Ascending aorta (tissue), 2 donors: ENCODE measurements at regions of chr16 and their contacts with region 1.

Region 1: DNA sequence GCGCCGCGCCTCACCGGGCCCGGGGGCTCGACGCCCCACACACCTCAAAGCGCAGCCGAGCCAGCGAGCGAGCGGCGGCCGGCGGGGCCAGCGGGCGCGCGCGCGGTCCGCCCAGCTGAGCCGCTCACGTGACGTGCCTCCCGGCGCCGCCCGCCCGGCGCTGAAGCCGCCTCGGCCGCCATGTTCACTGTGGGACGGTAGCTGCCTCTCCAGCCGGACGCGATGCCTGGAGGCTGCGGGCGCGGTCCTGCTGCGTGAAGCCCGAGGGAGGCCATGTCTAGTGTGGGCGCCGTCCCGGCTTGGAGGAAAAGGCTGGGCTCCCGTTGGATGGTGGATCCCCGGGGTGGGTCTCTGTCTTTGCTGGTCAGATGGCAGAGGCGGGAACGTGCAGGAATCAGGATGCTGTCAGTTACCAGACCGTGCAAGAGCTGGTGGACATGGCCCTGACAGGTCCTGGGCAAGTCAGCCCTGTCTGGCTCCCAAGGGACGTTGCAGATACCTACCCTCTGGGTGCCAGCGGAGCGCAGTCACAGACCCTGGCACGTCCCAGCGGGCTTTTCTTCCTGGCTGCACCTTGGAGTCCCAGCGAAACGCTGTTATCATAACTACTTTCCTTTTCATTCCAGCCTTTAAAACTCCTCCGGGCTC is at the start of gene USP31:
- DNase-seq: peak; percentile 82 to 97
- H3K4me3 ChIP-seq: peak within 1 kb of the TSS; percentile 76 to 88
- H3K27ac ChIP-seq: peak within 1 kb of the TSS; percentile 75 to 83
- H3K4me1 ChIP-seq: peaks cover 3 to 31% of the 10 kb centered on the region in 2 donors
- H3K27me3 ChIP-seq: no peaks in the 10 kb centered on the region
- CTCF ChIP-seq: no peak
- total RNA-seq, gene USP31: 6.2 TPM

Region 2: GRCh38 chr16:21599233-21600030 is 1550.0 kb before region 1 on chr16 and contains the start of gene METTL9:
- intact Hi-C with region 1: loop called (anchors 2 kb)
- DNase-seq: peak; percentile 82 to 96
- H3K4me3 ChIP-seq: peak within 1 kb of the TSS; percentile 93
- H3K27ac ChIP-seq: peak within 1 kb of the TSS; percentile 90 to 97
- H3K4me1 ChIP-seq: peaks cover 6 to 10% of the 10 kb centered on the region in 2 donors
- H3K27me3 ChIP-seq: no peaks in the 10 kb centered on the region
- CTCF ChIP-seq: peak in 1 of 3 experiments; percentile 9
- total RNA-seq, gene METTL9: 168 TPM

Region 3: GRCh38 chr16:23072084-23072599 is 77.3 kb before region 1 on chr16:
- intact Hi-C with region 1: loop called (anchors 1 kb)
- DNase-seq: peak; percentile 34 to 80
- H3K4me3 ChIP-seq: peak overlapping the region; percentile 23 to 47
- H3K27ac ChIP-seq: peak overlapping the region; percentile 74 to 85
- H3K4me1 ChIP-seq: peaks cover 2 to 21% of the 10 kb centered on the region in 2 donors
- H3K27me3 ChIP-seq: no peaks in the 10 kb centered on the region
- CTCF ChIP-seq: no peak

Region 4: GRCh38 chr16:23107936-23108335 is 41.5 kb before region 1 on chr16:
- intact Hi-C with region 1: loop called (anchors 5 kb)
- DNase-seq: no peak
- H3K4me3 ChIP-seq: no peak overlapping the region
- H3K27ac ChIP-seq: no peak overlapping the region
- H3K4me1 ChIP-seq: peaks cover 0 to 10% of the 10 kb centered on the region in 2 donors
- H3K27me3 ChIP-seq: no peaks in the 10 kb centered on the region
- CTCF ChIP-seq: no peak

Region 5: DNA sequence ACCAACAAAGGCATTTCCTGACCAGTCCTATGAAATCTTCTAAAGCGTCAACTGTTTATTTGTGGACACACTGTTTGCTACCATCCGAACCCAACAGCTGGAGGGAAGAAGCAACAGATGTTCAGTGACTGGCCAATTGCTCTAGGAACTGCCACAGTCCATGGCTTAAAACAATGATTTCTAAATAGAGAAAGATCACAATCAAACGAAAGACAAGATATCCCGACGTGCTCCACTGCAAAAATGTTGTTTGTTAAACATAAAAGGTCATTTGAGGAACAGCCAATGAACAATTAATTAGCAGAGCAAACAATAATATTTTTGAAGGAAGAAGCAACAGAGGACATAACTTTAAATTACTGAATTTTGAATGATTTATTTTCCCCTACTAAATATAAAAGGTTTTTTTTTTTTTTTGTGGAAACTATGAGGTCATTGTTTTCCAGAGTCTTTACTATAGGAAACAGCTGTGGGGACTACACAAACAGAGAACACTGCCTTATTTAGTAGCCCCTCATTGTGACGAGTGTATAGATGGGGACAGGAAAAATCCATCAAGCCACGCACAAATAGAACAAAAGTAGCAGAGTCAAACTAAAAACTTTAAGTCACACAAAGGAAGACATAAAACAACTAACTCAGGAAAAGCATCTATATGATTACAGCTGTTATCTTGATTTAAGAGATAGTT is 17.4 kb before region 1 on chr16:
- intact Hi-C with region 1: loop called (anchors 2 kb)
- DNase-seq: no peak
- H3K4me3 ChIP-seq: peak overlapping the region; percentile 31 to 55
- H3K27ac ChIP-seq: peak overlapping the region; percentile 80 to 81
- H3K4me1 ChIP-seq: peaks cover 5 to 26% of the 10 kb centered on the region in 2 donors
- H3K27me3 ChIP-seq: no peaks in the 10 kb centered on the region
- CTCF ChIP-seq: no peak

Region 6: GRCh38 chr16:25031441-25032307 is 1882.2 kb after region 1 on chr16:
- intact Hi-C with region 1: loop called (anchors 10 kb)
- DNase-seq: peak; percentile 76 to 94
- H3K4me3 ChIP-seq: peak overlapping the region; percentile 79 to 93
- H3K27ac ChIP-seq: peak overlapping the region; percentile 44 to 70
- H3K4me1 ChIP-seq: peaks cover 0 to 9% of the 10 kb centered on the region in 2 donors
- H3K27me3 ChIP-seq: no peaks in the 10 kb centered on the region
- CTCF ChIP-seq: no peak